Activated CD8-positive, alpha-beta T cell treated with anti-CD3 and anti-CD28 coated beads for 36 hours (primary cell): ENCODE measurements at regions of chr7 and their contacts with region 1.

Region 1: GRCh38 chr7:140673063-140673773 is 473 bp downstream of the ADCK2 start:
- DNase-seq: peak; percentile 57
- ATAC-seq: peak; percentile 74
- H3K4me3 Mint-ChIP-seq: peak overlapping the region; percentile 86
- H3K27ac Mint-ChIP-seq: peak overlapping the region; percentile 78
- H3K4me1 Mint-ChIP-seq: peaks cover 35% of the 10 kb centered on the region
- H3K27me3 Mint-ChIP-seq: no peaks in the 10 kb centered on the region
- CTCF ChIP-seq: no peak

Region 2: GRCh38 chr7:140596519-140597427 is 76.4 kb before region 1 on chr7:
- CTCF ChIA-PET with region 1: no interaction called
- POLR2A ChIA-PET with region 1: no interaction called
- intact Hi-C with region 1: no loop called
- DNase-seq: no peak
- ATAC-seq: no peak
- H3K4me3 Mint-ChIP-seq: no peak overlapping the region
- H3K27ac Mint-ChIP-seq: no peak overlapping the region
- H3K4me1 Mint-ChIP-seq: peaks cover 9% of the 10 kb centered on the region
- H3K27me3 Mint-ChIP-seq: peaks cover 11% of the 10 kb centered on the region
- CTCF ChIP-seq: no peak

Region 3: DNA sequence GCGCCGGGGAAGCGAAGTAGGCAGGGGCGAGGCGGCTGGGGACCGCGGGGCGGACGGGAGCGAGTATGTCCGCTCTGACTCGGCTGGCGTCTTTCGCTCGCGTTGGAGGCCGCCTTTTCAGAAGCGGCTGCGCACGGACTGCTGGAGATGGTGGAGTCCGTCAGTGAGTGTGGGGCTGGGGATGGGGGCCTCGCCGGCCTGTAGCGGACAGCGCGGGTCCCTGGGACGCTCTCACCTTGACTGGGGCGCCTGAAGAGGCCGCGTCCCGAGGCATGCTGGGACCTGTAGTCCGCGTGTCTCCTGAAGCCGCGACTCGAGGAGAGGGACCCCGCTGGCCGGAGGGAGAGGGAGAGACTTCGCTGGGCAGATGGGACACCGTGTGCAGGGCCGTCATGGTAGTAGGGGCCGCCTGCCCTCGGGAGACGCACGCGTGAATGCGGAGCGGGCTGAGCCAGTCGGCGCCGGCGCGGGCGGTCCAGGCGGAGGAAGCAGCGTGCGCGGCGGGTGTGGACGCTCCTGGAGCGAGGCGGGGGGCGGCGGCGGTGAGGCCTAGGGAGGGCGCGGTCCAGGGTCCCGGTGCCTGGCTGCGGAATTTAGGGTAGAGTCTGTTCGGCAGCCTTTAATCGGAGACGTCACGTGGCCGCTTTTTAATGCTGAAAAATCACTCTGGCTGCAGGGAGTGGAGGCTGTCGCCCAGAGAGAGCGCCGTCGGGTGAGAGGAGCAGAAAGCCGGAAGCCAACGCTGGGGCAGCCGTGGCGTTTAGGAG is 23.6 kb after region 1 on chr7 and contains the start of gene NDUFB2:
- CTCF ChIA-PET with region 1: interaction called, 3 read pairs
- POLR2A ChIA-PET with region 1: interaction called, 14 read pairs
- intact Hi-C with region 1: no loop called
- DNase-seq: peak; percentile 79
- ATAC-seq: peak; percentile 89
- H3K4me3 Mint-ChIP-seq: peak within 1 kb of the TSS; percentile 94
- H3K27ac Mint-ChIP-seq: peak within 1 kb of the TSS; percentile 97
- H3K4me1 Mint-ChIP-seq: peaks cover 29% of the 10 kb centered on the region
- H3K27me3 Mint-ChIP-seq: no peaks in the 10 kb centered on the region
- CTCF ChIP-seq: no peak
- total RNA-seq, gene NDUFB2: 159 to 177 TPM